ENCODE measurements at regions of chr20 and their contacts with region 1.

Region 1: GRCh38 chr20:62339647-62340070 is 27.5 kb downstream of the LAMA5 start:
- DNase-seq: no peak
- H3K4me3 ChIP-seq: no peak overlapping the region
- H3K27ac ChIP-seq: no peak overlapping the region
- H3K4me1 ChIP-seq: no peaks in the 10 kb centered on the region
- H3K27me3 ChIP-seq: no peaks in the 10 kb centered on the region
- CTCF ChIP-seq: no peak
- POLR2A ChIP-seq: no peak

Region 2: DNA sequence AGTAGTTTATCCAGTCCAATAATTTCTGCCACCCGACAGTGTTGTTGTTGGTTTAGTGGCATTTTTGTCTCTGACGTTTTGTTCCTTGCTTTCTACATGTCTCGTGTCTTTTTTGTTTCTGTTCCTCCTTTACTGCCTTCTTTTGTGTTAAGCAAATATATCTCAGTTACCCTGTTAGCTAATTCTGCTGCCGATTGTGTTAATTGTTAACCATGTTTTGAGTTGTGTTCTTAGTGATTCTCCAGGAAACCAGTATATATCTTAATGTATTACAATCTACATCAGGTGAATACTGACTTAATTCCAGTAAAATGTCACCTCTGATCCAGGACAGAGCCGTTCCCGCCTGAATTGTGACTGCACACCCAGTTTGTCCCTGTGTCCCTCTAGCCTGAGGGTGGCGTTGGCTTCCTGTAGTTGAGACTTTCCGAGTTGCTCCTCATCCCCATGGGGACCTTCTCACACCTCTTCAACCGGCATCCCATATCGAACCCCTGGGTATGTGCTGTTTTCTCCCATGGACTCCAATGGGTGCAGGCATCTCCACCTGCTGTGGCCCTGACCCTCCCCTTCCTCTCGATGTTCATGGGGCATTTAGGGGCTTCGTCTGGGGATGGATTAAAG is 702.9 kb after region 1 on chr20:
- intact Hi-C with region 1: loop called (anchors 5 kb)
- DNase-seq: no peak
- H3K4me3 ChIP-seq: no peak overlapping the region
- H3K27ac ChIP-seq: no peak overlapping the region
- H3K4me1 ChIP-seq: no peaks in the 10 kb centered on the region
- H3K27me3 ChIP-seq: peaks cover 0 to 71% of the 10 kb centered on the region in 2 donors
- CTCF ChIP-seq: no peak
- POLR2A ChIP-seq: no peak

Measured in breast epithelium (tissue), 4 donors.